ENCODE measurements at regions of chr7 and their contacts with region 1.

Region 1: DNA sequence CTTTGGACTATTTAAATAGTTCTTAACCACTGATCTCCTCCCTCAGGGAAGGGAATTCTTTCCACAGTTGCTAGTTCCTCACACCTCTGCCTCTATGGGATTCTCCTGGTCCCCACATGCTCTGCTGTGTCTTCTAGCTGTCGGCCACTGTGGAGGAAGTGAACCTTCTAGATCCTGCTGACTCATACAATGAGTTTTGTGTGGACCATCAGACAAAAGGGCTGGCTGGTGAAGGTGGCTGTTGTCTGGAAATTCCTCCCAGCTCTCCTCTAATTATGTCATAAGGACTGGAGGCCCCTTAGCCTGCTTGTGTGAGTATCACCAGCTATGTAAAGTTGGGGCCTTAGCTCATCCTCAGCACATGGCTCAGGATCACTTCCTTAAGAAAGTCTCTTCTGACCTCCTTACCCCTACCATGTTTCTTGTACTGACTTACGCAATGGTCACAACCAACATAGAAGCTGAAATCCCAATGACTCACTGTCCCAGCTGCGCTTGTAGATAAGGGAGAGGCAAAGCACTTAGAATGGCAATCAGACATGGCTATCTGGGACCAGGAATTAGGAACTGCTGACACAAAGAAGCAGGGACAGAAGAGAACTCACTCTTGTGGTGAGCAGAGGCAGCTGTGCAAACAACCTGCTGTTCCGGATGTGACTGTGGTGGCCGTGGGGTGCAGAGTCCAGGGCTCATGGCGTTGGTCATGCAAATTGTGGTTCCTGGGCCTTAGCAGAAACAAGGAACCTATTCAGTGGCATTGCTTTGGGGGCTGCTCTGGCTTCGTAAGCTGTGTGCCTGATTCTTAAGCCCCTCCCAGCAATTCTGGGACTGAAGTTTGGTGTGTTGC is 2.5 kb upstream of the MACC1 start:
- DNase-seq: peak; percentile 93
- ATAC-seq: peak; percentile 77
- H3K4me3 ChIP-seq: peak overlapping the region in 4 of 5 experiments; percentile 15 to 55 (median 26)
- H3K4me3 Mint-ChIP-seq: peak overlapping the region; percentile 80
- H3K27ac ChIP-seq: peak overlapping the region; percentile 88
- H3K27ac Mint-ChIP-seq: peak overlapping the region; percentile 94
- H3K4me1 ChIP-seq: peaks cover 45 to 53% of the 10 kb centered on the region in 2 donors
- H3K4me1 Mint-ChIP-seq: peaks cover 61% of the 10 kb centered on the region
- H3K27me3 ChIP-seq: no peaks in the 10 kb centered on the region
- H3K27me3 Mint-ChIP-seq: no peaks in the 10 kb centered on the region
- CTCF ChIP-seq: no peak

Region 2: DNA sequence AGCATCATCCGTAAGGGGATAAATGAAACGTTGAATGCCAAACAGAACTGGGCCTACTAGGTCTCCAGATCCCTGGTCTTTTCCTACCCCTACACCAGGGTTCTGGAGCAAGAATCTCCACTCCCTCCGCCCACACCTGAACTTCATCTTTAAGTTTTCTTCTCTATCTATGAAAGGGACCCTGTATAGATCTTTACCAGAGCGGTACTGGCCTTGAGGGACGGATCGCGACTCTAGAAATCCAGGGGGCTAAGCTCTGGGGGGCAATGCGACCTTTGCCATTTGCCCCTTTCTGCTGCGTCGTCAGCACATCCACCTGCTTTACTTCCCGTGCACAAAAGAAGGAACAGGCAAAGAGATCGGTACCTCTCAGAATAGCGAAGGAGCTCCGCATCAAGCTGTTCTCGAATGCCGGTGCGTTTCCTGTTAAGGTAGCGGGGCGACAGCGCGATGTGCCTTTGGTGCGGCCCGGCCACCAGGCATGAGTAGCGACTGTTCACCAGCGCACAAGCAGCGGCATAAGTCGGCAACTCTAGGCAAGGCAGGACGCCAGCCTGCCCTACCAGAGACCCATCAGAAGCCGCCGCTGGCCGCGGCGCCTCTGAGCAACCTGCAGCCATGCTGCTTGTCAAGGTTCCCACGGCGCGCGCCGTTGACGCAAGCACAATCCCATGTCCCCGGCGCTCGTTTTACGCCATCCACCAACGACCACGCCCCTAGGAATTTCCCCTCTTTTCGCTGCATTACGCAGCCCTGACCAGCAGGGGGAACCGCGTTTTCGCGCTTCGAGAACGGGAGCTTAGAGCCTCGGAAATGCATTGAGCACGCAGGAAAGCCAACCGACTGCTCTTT is 511.0 kb before region 1 on chr7 and contains the start of gene POLR1F:
- CTCF ChIA-PET with region 1: interaction called, 3 read pairs
- POLR2A ChIA-PET with region 1: no interaction called
- intact Hi-C with region 1: loop called (anchors 2 kb)
- DNase-seq: peak; percentile 98
- ATAC-seq: peak; percentile 97
- H3K4me3 ChIP-seq: peak within 1 kb of the TSS; percentile 60 to 95 (median 85)
- H3K4me3 Mint-ChIP-seq: peak within 1 kb of the TSS; percentile 96
- H3K27ac ChIP-seq: peak within 1 kb of the TSS; percentile 87 to 88
- H3K27ac Mint-ChIP-seq: peak within 1 kb of the TSS; percentile 94
- H3K4me1 ChIP-seq: peaks cover 17 to 20% of the 10 kb centered on the region in 2 donors
- H3K4me1 Mint-ChIP-seq: peaks cover 41% of the 10 kb centered on the region
- H3K27me3 ChIP-seq: no peaks in the 10 kb centered on the region
- H3K27me3 Mint-ChIP-seq: peaks cover 3% of the 10 kb centered on the region
- CTCF ChIP-seq: peak; percentile 80
- total RNA-seq, gene POLR1F: 13.8 and 14.0 TPM in 2 replicates

Region 3: DNA sequence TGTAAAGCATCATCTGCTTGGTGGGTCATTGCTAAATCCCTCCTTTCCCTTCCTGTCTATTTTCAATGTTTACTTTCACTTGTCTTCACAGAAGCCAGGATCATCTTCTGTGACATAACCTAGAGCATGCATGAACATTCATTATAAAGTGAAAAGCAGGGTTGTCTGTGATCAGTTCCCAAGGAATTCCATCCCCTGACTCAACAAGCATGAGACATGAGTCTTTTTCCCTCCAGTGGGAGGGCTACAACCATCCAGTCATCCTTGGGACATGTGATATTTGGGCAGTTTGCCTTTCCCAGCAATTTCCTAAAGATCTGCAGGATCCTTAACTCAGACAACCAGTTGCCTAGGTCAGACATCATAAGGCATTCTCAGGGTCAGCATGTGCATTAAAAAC is 279.9 kb before region 1 on chr7:
- CTCF ChIA-PET with region 1: no interaction called
- POLR2A ChIA-PET with region 1: no interaction called
- intact Hi-C with region 1: no loop called
- DNase-seq: no peak
- ATAC-seq: no peak
- H3K4me3 ChIP-seq: no peak overlapping the region
- H3K4me3 Mint-ChIP-seq: no peak overlapping the region
- H3K27ac ChIP-seq: no peak overlapping the region
- H3K27ac Mint-ChIP-seq: no peak overlapping the region
- H3K4me1 ChIP-seq: no peaks in the 10 kb centered on the region
- H3K4me1 Mint-ChIP-seq: no peaks in the 10 kb centered on the region
- H3K27me3 ChIP-seq: no peaks in the 10 kb centered on the region
- H3K27me3 Mint-ChIP-seq: no peaks in the 10 kb centered on the region
- CTCF ChIP-seq: no peak

Region 4: GRCh38 chr7:20114468-20114867 is 105.2 kb before region 1 on chr7:
- CTCF ChIA-PET with region 1: interaction called, 3 read pairs
- POLR2A ChIA-PET with region 1: interaction called, 3 read pairs
- intact Hi-C with region 1: loop called (anchors 1 kb)
- DNase-seq: peak; percentile 85
- ATAC-seq: peak; percentile 91
- H3K4me3 ChIP-seq: no peak overlapping the region
- H3K4me3 Mint-ChIP-seq: peak overlapping the region; percentile 60
- H3K27ac ChIP-seq: peak overlapping the region in 1 of 2 donors; percentile 62
- H3K27ac Mint-ChIP-seq: peak overlapping the region; percentile 69
- H3K4me1 ChIP-seq: peaks cover 19 to 23% of the 10 kb centered on the region in 2 donors
- H3K4me1 Mint-ChIP-seq: peaks cover 23% of the 10 kb centered on the region
- H3K27me3 ChIP-seq: no peaks in the 10 kb centered on the region
- H3K27me3 Mint-ChIP-seq: no peaks in the 10 kb centered on the region
- CTCF ChIP-seq: peak; percentile 27

Region 5: GRCh38 chr7:20172736-20173334 is 46.8 kb before region 1 on chr7:
- CTCF ChIA-PET with region 1: interaction called, 31 read pairs
- POLR2A ChIA-PET with region 1: no interaction called
- intact Hi-C with region 1: loop called (anchors 5 kb)
- DNase-seq: peak; percentile 54
- ATAC-seq: peak; percentile 60
- H3K4me3 ChIP-seq: no peak overlapping the region
- H3K4me3 Mint-ChIP-seq: no peak overlapping the region
- H3K27ac ChIP-seq: no peak overlapping the region
- H3K27ac Mint-ChIP-seq: no peak overlapping the region
- H3K4me1 ChIP-seq: peaks cover 0 to 3% of the 10 kb centered on the region in 2 donors
- H3K4me1 Mint-ChIP-seq: no peaks in the 10 kb centered on the region
- H3K27me3 ChIP-seq: no peaks in the 10 kb centered on the region
- H3K27me3 Mint-ChIP-seq: no peaks in the 10 kb centered on the region
- CTCF ChIP-seq: peak; percentile 43

Region 6: DNA sequence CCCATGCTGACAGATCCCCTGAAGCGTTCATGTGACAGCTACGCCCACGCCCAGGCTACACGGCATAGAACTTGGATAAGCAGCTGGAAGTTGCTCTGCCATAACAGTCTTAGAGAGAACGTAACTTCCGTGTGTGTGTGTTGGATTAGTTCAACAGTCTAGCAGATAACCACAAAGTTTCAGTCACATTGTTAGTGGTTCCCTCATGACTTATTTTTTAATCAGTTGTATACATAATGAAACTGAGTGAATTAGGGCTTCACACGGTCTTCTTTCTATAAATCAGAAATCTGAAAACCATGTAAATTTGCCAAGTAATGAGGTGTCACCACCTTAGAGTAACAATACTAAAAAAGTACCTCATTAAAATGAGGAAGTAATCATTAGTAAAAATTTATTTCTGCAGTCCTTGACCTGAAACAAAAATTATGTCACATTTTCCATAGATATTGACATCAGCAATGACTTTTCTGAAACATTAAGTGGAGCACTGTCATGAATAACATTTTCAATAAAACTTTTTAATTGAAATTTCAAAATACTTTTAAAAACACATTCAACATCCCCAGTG is 19.2 kb after region 1 on chr7:
- CTCF ChIA-PET with region 1: interaction called, 6 read pairs
- POLR2A ChIA-PET with region 1: interaction called, 5 read pairs
- intact Hi-C with region 1: loop called (anchors 1 kb)
- DNase-seq: peak; percentile 81
- ATAC-seq: peak; percentile 83
- H3K4me3 ChIP-seq: peak overlapping the region in 3 of 5 experiments; percentile 1 to 20 (median 8)
- H3K4me3 Mint-ChIP-seq: peak overlapping the region; percentile 83
- H3K27ac ChIP-seq: peak overlapping the region; percentile 26 to 60
- H3K27ac Mint-ChIP-seq: peak overlapping the region; percentile 95
- H3K4me1 ChIP-seq: peaks cover 16 to 18% of the 10 kb centered on the region in 2 donors
- H3K4me1 Mint-ChIP-seq: peaks cover 43% of the 10 kb centered on the region
- H3K27me3 ChIP-seq: no peaks in the 10 kb centered on the region
- H3K27me3 Mint-ChIP-seq: no peaks in the 10 kb centered on the region
- CTCF ChIP-seq: no peak